Uterus (tissue), 4 donors: ENCODE measurements at regions of chr1 and their contacts with region 1.

Region 1: DNA sequence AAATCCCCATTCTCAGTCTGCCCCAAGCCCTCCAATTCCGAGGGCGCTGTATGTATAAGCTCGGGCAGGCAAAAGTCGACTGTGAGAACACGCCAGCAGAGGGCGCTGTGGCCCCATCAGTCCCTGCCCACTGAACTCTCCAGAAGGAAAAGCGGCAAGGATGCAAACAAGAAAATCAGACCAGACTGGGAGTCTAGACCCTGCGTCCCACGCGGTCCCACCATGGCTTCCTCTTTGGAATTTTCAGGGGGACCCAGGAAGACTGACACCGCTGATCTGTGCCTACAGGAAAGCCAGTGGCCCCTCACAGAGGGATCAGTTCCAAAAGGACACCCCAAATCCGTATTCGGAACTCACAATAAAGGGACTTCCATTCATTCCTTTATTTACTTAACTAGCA is 19.5 kb downstream of the TEX35 start:
- DNase-seq: peak; percentile 77 to 80
- H3K4me3 ChIP-seq: no peak overlapping the region
- H3K27ac ChIP-seq: no peak overlapping the region
- H3K4me1 ChIP-seq: no peaks in the 10 kb centered on the region
- H3K27me3 ChIP-seq: no peaks in the 10 kb centered on the region
- CTCF ChIP-seq: peak; percentile 75 to 87 (median 80)
- POLR2A ChIP-seq: no peak

Region 2: DNA sequence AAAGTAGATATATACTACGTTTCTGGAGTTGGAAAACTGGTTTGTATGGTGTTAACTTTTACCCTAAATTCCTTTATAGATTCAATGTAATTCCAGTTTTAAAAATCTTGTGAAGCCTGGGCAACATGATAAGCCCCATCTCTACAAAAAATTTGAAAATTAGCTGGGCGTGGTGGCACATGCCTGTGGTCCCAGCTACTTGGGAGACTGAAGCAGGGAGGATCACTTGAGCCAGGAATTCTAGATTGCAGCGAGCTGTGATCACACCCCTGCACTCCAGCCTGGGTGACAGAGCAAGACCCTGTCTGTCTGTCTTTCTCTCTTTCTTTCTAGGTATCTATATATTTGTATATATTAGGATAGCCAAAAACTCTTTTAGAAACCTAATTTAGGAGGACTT is 177.6 kb before region 1 on chr1:
- intact Hi-C with region 1: no loop called
- DNase-seq: no peak
- H3K4me3 ChIP-seq: no peak overlapping the region
- H3K27ac ChIP-seq: no peak overlapping the region
- H3K4me1 ChIP-seq: no peaks in the 10 kb centered on the region
- H3K27me3 ChIP-seq: no peaks in the 10 kb centered on the region
- CTCF ChIP-seq: no peak
- POLR2A ChIP-seq: no peak

Region 3: DNA sequence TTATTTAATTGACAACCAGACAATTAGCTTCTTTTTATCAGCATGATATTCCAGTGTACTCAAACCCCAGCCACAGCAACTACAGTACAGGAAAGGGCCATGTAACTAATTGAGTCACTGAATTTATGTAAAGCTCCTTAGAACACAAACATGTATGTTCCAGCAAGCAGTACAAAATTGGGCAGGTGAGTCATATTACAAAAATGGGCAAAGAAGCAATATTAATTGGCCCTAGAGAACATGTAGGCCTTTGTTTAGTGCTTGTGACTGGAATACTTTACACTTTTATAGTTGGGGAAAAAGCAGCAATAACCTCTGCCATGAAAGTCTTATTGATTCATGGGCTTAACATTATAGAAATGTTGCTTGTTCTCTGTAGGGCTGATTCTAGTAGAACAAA is 67.4 kb before region 1 on chr1:
- intact Hi-C with region 1: no loop called
- DNase-seq: no peak
- H3K4me3 ChIP-seq: no peak overlapping the region
- H3K27ac ChIP-seq: no peak overlapping the region
- H3K4me1 ChIP-seq: no peaks in the 10 kb centered on the region
- H3K27me3 ChIP-seq: no peaks in the 10 kb centered on the region
- CTCF ChIP-seq: no peak
- POLR2A ChIP-seq: no peak

Region 4: DNA sequence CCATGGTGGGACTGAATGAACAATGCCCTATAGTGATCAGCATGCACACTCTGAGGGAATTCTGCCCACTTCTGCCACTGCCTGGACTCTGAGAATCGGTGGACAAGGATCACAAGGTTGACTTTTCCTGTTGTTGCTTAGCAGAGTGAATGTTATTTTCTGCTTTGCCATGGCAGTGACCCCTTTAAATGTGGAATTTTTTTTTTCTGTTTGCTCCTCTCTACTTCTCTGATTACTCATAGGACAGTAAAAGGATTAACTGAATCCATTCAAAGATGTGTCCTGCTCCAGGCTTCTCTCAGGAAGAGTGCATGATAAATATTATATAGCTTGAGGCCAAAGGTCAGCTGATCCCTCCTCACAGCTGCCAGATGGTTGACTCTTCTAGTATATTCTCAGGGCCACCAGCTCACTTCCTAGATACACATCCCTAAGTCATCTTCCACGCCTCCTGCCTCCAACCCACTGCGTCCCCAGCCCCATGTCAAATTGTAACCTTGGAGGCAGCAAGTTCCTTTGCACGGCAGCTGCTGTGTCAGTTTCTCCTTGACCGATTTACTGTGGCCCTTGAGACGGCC is 118.6 kb after region 1 on chr1:
- intact Hi-C with region 1: no loop called
- DNase-seq: no peak
- H3K4me3 ChIP-seq: no peak overlapping the region
- H3K27ac ChIP-seq: no peak overlapping the region
- H3K4me1 ChIP-seq: no peaks in the 10 kb centered on the region
- H3K27me3 ChIP-seq: no peaks in the 10 kb centered on the region
- CTCF ChIP-seq: no peak
- POLR2A ChIP-seq: no peak

Region 5: GRCh38 chr1:178752891-178753290 is 220.5 kb after region 1 on chr1:
- intact Hi-C with region 1: loop called (anchors 1 kb)
- DNase-seq: no peak
- H3K4me3 ChIP-seq: no peak overlapping the region
- H3K27ac ChIP-seq: no peak overlapping the region
- H3K4me1 ChIP-seq: no peaks in the 10 kb centered on the region
- H3K27me3 ChIP-seq: no peaks in the 10 kb centered on the region
- CTCF ChIP-seq: no peak
- POLR2A ChIP-seq: no peak